Prostate gland (tissue), 2 donors: ENCODE measurements at regions of chr12 and their contacts with region 1.

Region 1: DNA sequence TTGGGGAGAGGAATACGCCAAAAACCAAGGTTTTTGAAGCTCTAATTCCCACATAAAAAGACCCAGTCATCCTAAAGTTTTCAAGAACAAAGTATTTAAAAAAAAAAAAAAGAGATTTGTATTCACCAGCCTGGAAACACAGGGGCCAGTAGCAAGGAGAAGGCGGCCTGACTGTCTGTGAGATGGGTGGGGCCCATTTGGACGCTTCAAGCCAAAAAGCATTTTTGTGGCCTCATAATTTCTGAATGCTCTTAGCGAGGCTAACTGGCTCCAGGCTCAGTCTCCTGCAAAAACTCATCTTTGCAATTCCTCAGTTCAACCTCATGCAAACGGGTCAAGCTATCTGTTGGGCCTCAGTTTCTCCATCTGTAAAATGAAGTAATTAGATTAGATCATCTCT is 514.1 kb downstream of the MED13L start:
- DNase-seq: peak; percentile 85
- H3K4me3 ChIP-seq: no peak overlapping the region
- H3K27ac ChIP-seq: peak overlapping the region; percentile 94 to 97
- H3K4me1 ChIP-seq: peaks cover 8% of the 10 kb centered on the region
- H3K27me3 ChIP-seq: no peaks in the 10 kb centered on the region
- CTCF ChIP-seq: no peak
- POLR2A ChIP-seq: no peak

Region 2: GRCh38 chr12:115623764-115624334 is 139.5 kb before region 1 on chr12:
- intact Hi-C with region 1: no loop called
- DNase-seq: no peak
- H3K4me3 ChIP-seq: no peak overlapping the region
- H3K27ac ChIP-seq: no peak overlapping the region
- H3K4me1 ChIP-seq: no peaks in the 10 kb centered on the region
- H3K27me3 ChIP-seq: no peaks in the 10 kb centered on the region
- CTCF ChIP-seq: no peak
- POLR2A ChIP-seq: no peak

Region 3: GRCh38 chr12:115710104-115710564 is 53.2 kb before region 1 on chr12:
- intact Hi-C with region 1: no loop called
- DNase-seq: peak; percentile 25
- H3K4me3 ChIP-seq: no peak overlapping the region
- H3K27ac ChIP-seq: no peak overlapping the region
- H3K4me1 ChIP-seq: no peaks in the 10 kb centered on the region
- H3K27me3 ChIP-seq: no peaks in the 10 kb centered on the region
- CTCF ChIP-seq: no peak
- POLR2A ChIP-seq: no peak

Region 4: DNA sequence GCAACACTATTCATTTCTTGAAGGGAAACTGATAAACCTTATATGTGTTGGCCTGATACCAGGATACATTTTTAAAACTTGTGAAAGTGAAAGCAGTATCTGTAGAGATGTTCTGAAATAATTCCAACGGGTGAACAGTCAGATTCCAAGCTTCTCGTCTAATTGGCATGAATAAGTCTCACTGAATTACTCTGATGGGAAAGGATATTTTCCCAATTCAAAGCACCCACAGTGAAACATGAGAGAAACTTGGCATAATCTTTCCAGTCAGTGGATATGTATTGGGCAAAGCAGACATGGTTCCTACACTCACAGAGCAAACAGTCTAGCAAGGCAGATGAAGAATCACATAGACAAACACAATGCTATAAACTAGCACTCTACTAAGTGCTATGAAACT is 101.0 kb after region 1 on chr12:
- intact Hi-C with region 1: loop called (anchors 5 kb)
- DNase-seq: no peak
- H3K4me3 ChIP-seq: no peak overlapping the region
- H3K27ac ChIP-seq: peak overlapping the region in 1 of 2 donors; percentile 40
- H3K4me1 ChIP-seq: no peaks in the 10 kb centered on the region
- H3K27me3 ChIP-seq: no peaks in the 10 kb centered on the region
- CTCF ChIP-seq: no peak
- POLR2A ChIP-seq: no peak